ENCODE measurements at regions of chr3 and their contacts with region 1.

Region 1: DNA sequence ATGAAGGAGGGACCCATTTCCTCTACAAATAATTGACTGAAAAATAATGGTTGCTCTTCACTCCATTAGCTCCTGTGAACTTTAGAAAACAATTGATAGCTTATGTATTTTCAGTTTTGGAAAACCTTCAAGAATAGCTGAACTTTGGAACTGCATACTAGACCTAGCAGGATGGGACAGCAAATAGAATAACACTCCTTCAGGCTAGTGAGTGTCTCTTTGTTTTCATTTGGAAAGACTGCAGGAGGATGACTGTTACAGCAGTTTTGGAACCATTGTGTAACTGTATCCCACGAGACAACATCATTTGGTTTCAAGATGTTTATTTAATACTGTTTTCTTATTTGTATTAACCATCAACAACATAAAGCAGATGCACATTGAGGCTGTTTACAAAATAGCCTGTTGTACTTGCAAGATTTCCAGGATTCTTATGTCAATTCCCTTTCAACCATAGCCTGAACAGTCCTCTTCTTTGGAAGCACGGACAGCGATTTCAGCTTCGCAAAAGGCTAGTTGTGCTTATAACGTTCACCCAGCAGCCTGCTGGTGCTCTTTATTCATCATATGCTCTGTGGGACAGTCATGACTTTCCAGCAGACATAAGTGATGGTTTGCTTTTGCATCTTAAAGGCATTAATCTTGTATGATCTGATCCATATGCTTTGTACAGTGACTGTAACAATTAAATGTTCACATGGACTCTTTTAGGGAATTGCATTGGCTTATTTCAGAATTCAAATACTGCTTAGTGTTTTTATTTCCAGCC is 335.5 kb downstream of the IL5RA start:
- DNase-seq: no peak
- ATAC-seq: no peak
- H3K4me3 ChIP-seq: no peak overlapping the region
- H3K27ac ChIP-seq: no peak overlapping the region
- H3K4me1 ChIP-seq: no peaks in the 10 kb centered on the region
- H3K27me3 ChIP-seq: no peaks in the 10 kb centered on the region
- CTCF ChIP-seq: no peak

Region 2: DNA sequence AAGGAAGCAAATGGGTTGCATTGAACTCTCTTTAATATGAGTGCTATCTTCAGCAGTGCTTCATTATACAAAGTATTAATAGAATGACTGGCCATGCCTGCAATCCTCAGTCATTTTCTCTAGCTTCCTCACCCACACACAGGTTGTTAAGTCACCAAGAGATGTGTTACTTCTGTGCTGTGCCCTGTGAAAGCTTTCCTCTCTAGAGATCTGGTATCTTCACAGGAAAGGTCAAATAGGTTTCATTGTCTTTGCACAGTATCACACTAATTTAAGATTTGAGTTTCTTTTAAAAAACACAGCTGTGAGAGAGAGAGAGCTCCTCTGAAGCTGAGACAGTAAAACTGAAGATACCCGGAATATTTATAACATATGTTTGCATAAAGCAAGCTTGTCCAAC is 397.4 kb before region 1 on chr3:
- intact Hi-C with region 1: no loop called
- DNase-seq: no peak
- ATAC-seq: no peak
- H3K4me3 ChIP-seq: no peak overlapping the region
- H3K27ac ChIP-seq: no peak overlapping the region
- H3K4me1 ChIP-seq: no peaks in the 10 kb centered on the region
- H3K27me3 ChIP-seq: no peaks in the 10 kb centered on the region
- CTCF ChIP-seq: no peak

Region 3: DNA sequence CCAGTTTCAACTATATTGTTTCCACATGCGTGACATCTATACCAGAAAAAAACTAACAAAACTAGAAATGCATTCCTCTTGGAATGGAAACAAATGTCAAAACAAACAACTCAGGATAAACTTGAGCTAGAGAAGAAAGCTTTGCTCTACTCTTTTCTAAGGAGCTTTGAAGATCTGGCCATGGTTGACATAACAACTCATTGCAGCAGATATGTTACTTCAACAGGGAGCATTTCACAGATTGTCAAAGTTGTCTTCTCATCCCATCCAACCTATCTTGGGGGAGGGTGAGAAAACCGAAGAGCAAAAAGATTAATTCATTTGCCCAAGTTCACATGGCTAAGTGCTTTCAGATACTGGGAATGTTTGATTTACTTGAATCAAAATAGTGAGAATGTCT is 191.6 kb before region 1 on chr3:
- intact Hi-C with region 1: loop called (anchors 5 kb)
- DNase-seq: no peak
- ATAC-seq: no peak
- H3K4me3 ChIP-seq: no peak overlapping the region
- H3K27ac ChIP-seq: no peak overlapping the region
- H3K4me1 ChIP-seq: no peaks in the 10 kb centered on the region
- H3K27me3 ChIP-seq: no peaks in the 10 kb centered on the region
- CTCF ChIP-seq: no peak

Measured in upper lobe of right lung (tissue), 1 donor.